K562 (cell line): ENCODE measurements at regions of chr1 and their contacts with region 1.

Region 1: DNA sequence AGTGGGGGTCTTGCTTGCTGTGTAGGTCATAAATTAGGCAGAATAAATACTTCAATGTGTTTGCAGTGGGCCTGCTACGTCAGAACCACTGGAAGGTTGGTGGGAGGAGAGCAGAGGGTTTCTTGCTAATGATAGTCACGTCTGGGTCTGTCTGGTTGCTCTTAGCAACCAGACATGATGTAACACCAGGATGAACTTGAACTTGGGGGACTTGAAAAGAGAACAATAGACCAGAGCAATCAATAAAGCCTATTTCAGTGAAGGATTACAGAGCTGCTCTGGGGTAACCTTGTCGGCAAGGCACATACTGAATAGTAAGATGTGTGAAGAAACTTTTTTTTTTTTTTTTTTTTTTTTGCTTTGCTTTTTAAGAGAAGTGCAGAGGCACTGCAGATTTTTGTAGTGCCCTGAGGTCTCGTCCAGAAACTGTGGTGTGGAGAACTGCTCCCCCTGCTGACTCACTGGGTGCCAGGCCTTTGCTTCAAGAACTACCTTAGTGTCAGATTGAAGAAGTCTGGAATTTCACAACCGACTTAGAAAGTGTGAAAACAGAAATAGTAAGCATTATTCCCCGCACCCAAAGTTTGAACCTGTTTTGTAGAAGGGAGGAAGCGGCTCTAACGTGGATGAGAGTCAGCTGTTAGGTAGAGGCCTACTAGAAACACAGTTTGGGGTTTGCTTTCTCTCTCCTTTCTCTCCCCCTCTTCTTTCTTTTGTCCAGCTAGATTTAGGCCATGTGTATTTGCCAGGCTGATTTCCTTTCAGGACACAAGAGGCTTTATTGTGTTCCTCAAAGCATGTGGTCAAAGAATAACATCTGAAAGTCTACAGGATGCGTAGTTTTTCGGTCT is 271.6 kb downstream of the TM2D1 start:
- DNase-seq: peak; percentile 59 to 85 (median 68)
- ATAC-seq: peak; percentile 97
- H3K4me3 ChIP-seq: no peak overlapping the region
- H3K27ac ChIP-seq: no peak overlapping the region
- H3K4me1 ChIP-seq: peaks cover 3 to 7% of the 10 kb centered on the region in 2 experiments; a peak in 3 of 5 replicates
- H3K27me3 ChIP-seq: no peaks in the 10 kb centered on the region
- CTCF ChIP-seq: peak; percentile 74 to 85 (median 83)
- EP300 ChIP-seq: no peak
- POLR2A ChIP-seq: no peak
- RAD21 ChIP-seq: peak; percentile 80 to 82

Region 2: DNA sequence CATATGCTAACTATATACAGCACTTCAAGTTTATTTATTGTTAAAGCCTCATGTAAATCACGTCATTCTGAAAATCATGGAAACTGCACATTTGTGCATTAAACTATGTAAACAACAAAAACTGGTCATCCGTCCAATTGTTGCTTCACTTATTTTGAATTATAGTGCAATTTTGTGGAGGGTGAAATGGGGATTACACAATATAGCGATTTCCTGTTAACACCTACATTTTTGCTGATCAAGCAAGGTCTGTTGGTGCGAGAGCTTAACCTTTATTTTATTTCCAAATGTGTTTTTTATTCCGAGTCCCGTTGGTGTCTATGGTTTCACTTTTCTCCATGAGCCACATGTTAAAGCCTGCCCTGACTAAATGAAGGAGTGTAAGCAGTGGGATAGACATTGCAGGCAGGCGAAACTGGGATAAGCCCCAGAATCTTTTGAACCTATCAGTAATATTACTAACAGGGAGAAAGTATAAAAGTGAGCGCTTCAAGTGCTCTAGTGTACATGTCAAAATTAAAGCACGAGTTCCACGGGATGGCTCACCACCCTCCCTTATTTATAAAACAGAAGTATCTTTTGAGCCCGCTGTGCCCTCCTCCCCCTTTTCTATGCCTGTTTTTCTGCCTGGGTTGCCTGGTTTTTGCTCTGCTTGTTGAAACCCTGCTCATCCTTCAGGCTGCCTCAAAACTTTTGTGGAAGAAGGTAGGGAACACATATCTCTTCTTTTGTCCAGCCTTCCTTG is 250.3 kb before region 1 on chr1:
- CTCF ChIA-PET with region 1: no interaction called
- POLR2A ChIA-PET with region 1: interaction called, 3 read pairs
- in situ Hi-C with region 1: no loop called
- intact Hi-C with region 1: loop called (anchors 2 kb)
- DNase-seq: no peak
- ATAC-seq: peak; percentile 35
- H3K4me3 ChIP-seq: no peak overlapping the region
- H3K27ac ChIP-seq: peak overlapping the region; percentile 52; the same call in 2 of the 3 replicates
- H3K4me1 ChIP-seq: peaks cover 3 to 20% of the 10 kb centered on the region in 2 experiments
- H3K27me3 ChIP-seq: no peaks in the 10 kb centered on the region
- CTCF ChIP-seq: no peak
- EP300 ChIP-seq: no peak
- POLR2A ChIP-seq: no peak
- RAD21 ChIP-seq: no peak

Region 3: GRCh38 chr1:61287734-61288133 is 165.6 kb before region 1 on chr1:
- CTCF ChIA-PET with region 1: no interaction called
- POLR2A ChIA-PET with region 1: no interaction called
- in situ Hi-C with region 1: no loop called
- intact Hi-C with region 1: loop called (anchors 5 kb)
- DNase-seq: no peak
- ATAC-seq: no peak
- H3K4me3 ChIP-seq: no peak overlapping the region
- H3K27ac ChIP-seq: no peak overlapping the region
- H3K4me1 ChIP-seq: no peaks in the 10 kb centered on the region; a peak in 1 of 5 replicates
- H3K27me3 ChIP-seq: no peaks in the 10 kb centered on the region
- CTCF ChIP-seq: no peak
- EP300 ChIP-seq: no peak
- POLR2A ChIP-seq: no peak
- RAD21 ChIP-seq: no peak